CD4-positive, alpha-beta memory T cell (primary cell): ENCODE measurements at regions of chr11 and their contacts with region 1.

Region 1: GRCh38 chr11:14907411-14908213 is 15.6 kb upstream of the CYP2R1 start:
- DNase-seq: peak; percentile 74 to 81 (median 76)
- H3K4me3 ChIP-seq: no peak overlapping the region
- H3K4me3 Mint-ChIP-seq: peak overlapping the region in 4 of 8 donors; percentile 21 to 53 (median 40)
- H3K27ac ChIP-seq: no peak overlapping the region
- H3K27ac Mint-ChIP-seq: peak overlapping the region; percentile 6 to 94 (median 69)
- H3K4me1 ChIP-seq: peaks cover 29% of the 10 kb centered on the region
- H3K4me1 Mint-ChIP-seq: peaks cover 22 to 50% (median 34%) of the 10 kb centered on the region in 4 donors
- H3K27me3 ChIP-seq: no peaks in the 10 kb centered on the region
- H3K27me3 Mint-ChIP-seq: no peaks in the 10 kb centered on the region

Region 2: DNA sequence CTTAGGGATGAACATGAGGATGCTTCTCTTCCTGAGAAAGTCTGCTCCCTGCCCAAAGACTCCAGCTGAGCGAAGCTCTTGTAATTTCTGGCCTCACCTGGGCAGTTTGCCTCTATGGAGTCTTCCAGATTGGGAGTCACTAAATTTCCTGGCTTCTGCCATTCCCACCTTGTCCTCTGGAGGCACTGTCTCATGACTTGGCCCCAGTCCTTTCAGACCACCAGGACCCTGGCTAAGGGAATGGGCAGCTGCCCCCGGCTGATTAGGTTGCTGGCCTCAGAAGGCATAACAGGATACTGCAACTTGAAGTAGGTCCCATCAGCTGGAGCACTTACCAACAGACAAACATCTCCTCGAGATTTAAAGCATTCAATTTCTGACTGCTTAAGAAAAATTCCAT is 1073.1 kb before region 1 on chr11:
- CTCF ChIA-PET with region 1: no interaction called
- POLR2A ChIA-PET with region 1: no interaction called
- intact Hi-C with region 1: no loop called
- DNase-seq: no peak
- H3K4me3 ChIP-seq: no peak overlapping the region
- H3K4me3 Mint-ChIP-seq: no peak overlapping the region
- H3K27ac ChIP-seq: no peak overlapping the region
- H3K27ac Mint-ChIP-seq: no peak overlapping the region
- H3K4me1 ChIP-seq: no peaks in the 10 kb centered on the region
- H3K4me1 Mint-ChIP-seq: peaks cover 0 to 4% (median under 1%) of the 10 kb centered on the region in 4 donors
- H3K27me3 ChIP-seq: no peaks in the 10 kb centered on the region
- H3K27me3 Mint-ChIP-seq: peaks cover 0 to 2% of the 10 kb centered on the region in 2 donors

Region 3: DNA sequence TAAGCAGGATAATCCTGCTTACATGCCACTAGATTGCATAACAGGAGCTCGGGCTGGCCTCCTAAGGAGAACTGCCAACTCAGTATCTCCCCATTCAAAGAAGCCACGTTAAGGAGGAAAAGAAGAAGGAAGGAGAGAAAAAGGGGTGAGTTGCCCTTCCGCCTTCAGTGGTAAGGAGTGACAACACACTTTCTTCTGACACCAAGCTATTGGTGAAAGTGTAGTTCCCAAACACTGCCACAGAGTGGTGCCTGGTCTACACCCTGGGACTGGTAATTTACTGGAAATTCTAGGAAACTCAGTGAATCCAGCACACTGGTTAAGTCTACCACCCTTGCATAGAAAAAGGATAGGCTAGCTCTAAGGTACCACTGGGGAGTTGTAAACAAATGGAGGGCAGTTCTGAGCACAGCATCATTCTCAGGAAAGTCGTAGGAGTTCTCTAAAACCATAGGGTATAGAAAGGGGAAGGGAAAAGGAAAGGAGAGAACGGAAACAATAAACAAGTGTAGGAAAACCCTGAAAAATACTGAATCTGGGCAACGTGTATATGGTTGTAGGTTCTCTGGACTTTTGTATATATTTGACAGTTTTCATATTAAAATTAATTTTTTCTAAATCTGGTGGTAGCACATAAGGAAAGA is 606.8 kb before region 1 on chr11:
- CTCF ChIA-PET with region 1: interaction called, 15 read pairs
- POLR2A ChIA-PET with region 1: no interaction called
- intact Hi-C with region 1: loop called (anchors 1 kb)
- DNase-seq: peak in 4 of 5 donors; percentile 36 to 47 (median 44)
- H3K4me3 ChIP-seq: no peak overlapping the region
- H3K4me3 Mint-ChIP-seq: no peak overlapping the region
- H3K27ac ChIP-seq: no peak overlapping the region
- H3K27ac Mint-ChIP-seq: no peak overlapping the region
- H3K4me1 ChIP-seq: peaks cover 7% of the 10 kb centered on the region
- H3K4me1 Mint-ChIP-seq: peaks cover 0 to 10% (median 4%) of the 10 kb centered on the region in 4 donors
- H3K27me3 ChIP-seq: no peaks in the 10 kb centered on the region
- H3K27me3 Mint-ChIP-seq: no peaks in the 10 kb centered on the region

Region 4: DNA sequence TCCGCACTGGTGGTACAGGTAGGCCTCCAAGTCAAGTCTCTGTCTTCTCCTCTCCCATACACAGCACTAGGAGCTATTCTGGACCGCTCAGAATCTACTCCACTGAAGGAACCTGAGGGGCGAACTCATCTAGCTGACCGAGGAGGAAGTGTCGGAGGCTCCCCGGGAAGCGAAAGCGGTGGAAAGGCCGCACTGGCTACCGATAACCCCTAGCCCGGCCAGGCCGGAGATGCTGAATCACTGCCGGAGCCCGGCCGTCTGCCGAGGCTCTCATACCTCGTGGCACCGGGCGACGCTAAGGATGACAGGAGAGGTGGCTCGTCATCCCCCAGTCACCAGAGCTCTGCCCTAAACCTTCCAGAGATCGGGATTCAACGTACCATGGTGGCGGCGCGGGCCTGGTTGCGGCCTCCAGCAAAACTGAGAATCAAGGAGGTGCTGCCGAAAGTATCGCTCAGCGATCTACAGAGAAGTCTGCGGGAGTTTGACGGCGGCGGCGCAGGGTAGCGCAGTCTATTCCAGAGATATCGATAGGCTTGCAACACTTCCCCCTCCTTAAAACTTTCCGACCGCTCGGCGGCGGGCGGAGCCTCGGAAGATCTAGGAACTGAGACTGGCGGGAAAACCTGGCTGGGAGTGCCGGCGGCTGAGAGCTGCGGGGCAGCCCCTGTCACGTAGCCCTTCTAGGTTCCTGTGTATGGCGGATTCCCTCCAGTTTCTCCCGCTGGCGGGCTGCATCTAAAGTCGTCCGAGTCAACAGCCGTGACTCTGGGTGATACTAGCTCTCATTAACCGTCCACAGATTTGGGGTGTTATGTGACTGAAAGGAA is 387.5 kb before region 1 on chr11 and contains the start of gene PSMA1:
- CTCF ChIA-PET with region 1: interaction called, 34 read pairs
- POLR2A ChIA-PET with region 1: interaction called, 8 read pairs
- intact Hi-C with region 1: loop called (anchors 1 kb)
- DNase-seq: peak; percentile 88 to 96 (median 91)
- H3K4me3 ChIP-seq: peak within 1 kb of the TSS; percentile 63 to 95
- H3K4me3 Mint-ChIP-seq: peak within 1 kb of the TSS; percentile 93 to 99 (median 98)
- H3K27ac ChIP-seq: peak within 1 kb of the TSS; percentile 99
- H3K27ac Mint-ChIP-seq: peak within 1 kb of the TSS; percentile 95 to 98 (median 98)
- H3K4me1 ChIP-seq: peaks cover 27% of the 10 kb centered on the region
- H3K4me1 Mint-ChIP-seq: peaks cover 17 to 41% (median 29%) of the 10 kb centered on the region in 4 donors
- H3K27me3 ChIP-seq: no peaks in the 10 kb centered on the region
- H3K27me3 Mint-ChIP-seq: no peaks in the 10 kb centered on the region
- total RNA-seq, gene PSMA1: 95.8 to 105 TPM

Region 5: DNA sequence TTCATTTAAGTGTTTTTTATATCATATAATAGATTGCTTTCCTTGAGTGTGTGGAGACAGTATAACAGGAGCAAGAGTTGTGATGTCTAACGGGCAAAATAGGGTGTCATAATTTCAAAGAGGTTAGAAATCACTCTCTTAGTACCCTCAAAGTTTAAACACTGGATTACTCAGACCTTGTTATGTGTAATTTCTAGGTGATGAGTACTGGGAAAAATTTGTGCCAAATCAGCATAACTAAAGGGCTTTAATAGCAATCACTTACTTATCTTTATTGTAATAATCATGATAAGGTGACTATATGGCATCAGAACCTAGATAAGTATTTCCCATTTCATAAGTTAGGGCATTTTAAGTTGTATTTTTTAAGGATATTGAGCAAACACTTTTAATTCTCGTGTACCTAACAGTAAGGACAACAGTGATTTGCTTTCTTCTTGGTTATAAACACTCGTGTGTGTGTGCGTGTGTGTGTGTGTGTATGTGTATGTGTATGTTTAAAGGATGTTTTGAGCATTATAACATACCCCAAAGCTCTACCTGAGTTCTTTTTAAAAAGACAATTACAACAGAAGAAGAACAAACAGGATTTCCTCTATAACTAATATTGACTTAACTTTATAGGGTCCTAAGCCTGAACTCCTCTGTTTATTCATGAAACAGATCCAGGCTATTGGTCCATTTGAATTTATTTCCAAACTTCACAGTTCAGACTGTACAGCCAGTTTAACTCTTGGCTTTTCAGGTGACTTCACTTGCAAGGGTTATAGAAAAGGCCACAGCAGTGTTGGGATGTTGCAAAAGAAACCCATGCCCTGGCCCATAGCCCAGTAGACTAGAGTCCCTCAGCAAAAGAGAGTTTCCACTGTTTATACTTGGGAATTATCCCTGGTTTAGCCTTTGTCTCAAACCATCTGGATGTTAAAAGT is 287.7 kb before region 1 on chr11:
- CTCF ChIA-PET with region 1: interaction called, 81 read pairs
- POLR2A ChIA-PET with region 1: interaction called, 5 read pairs
- intact Hi-C with region 1: loop called (anchors 1 kb)
- DNase-seq: no peak
- H3K4me3 ChIP-seq: no peak overlapping the region
- H3K4me3 Mint-ChIP-seq: no peak overlapping the region
- H3K27ac ChIP-seq: no peak overlapping the region
- H3K27ac Mint-ChIP-seq: peak overlapping the region in 1 of 7 donors; percentile 65
- H3K4me1 ChIP-seq: peaks cover 5% of the 10 kb centered on the region
- H3K4me1 Mint-ChIP-seq: peaks cover 17 to 55% (median 34%) of the 10 kb centered on the region in 4 donors
- H3K27me3 ChIP-seq: no peaks in the 10 kb centered on the region
- H3K27me3 Mint-ChIP-seq: no peaks in the 10 kb centered on the region

Region 6: GRCh38 chr11:14819596-14819995 is 88.0 kb before region 1 on chr11:
- CTCF ChIA-PET with region 1: interaction called, 18 read pairs
- POLR2A ChIA-PET with region 1: no interaction called
- intact Hi-C with region 1: no loop called
- DNase-seq: no peak
- H3K4me3 ChIP-seq: no peak overlapping the region
- H3K4me3 Mint-ChIP-seq: no peak overlapping the region
- H3K27ac ChIP-seq: no peak overlapping the region
- H3K27ac Mint-ChIP-seq: no peak overlapping the region
- H3K4me1 ChIP-seq: no peaks in the 10 kb centered on the region
- H3K4me1 Mint-ChIP-seq: no peaks in the 10 kb centered on the region
- H3K27me3 ChIP-seq: no peaks in the 10 kb centered on the region
- H3K27me3 Mint-ChIP-seq: no peaks in the 10 kb centered on the region

Region 7: GRCh38 chr11:14949437-14950147 is 42.0 kb after region 1 on chr11:
- CTCF ChIA-PET with region 1: interaction called, 12 read pairs
- POLR2A ChIA-PET with region 1: no interaction called
- intact Hi-C with region 1: no loop called
- DNase-seq: no peak
- H3K4me3 ChIP-seq: no peak overlapping the region
- H3K4me3 Mint-ChIP-seq: no peak overlapping the region
- H3K27ac ChIP-seq: no peak overlapping the region
- H3K27ac Mint-ChIP-seq: no peak overlapping the region
- H3K4me1 ChIP-seq: no peaks in the 10 kb centered on the region
- H3K4me1 Mint-ChIP-seq: no peaks in the 10 kb centered on the region
- H3K27me3 ChIP-seq: no peaks in the 10 kb centered on the region
- H3K27me3 Mint-ChIP-seq: peaks cover 0 to 2% of the 10 kb centered on the region in 2 donors

Region 8: DNA sequence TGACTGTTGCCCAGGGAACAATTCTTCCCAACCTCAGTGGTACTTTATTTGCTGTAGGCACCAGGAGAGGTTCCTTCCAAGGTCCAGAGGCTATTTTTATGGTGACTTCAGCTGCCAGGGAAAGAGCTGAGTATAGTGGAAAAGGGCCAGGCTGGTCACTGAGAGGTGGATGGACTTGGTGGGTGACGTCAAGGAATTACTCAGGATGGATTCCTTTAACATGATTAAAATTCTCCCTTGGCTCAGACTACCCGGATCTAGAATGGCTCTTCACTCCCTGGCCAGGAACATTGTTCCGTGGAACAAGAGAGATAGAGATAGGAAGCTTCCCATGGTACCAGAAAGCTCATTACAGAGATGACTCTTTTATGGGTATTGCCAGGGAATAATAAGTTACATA is 73.2 kb after region 1 on chr11:
- CTCF ChIA-PET with region 1: no interaction called
- POLR2A ChIA-PET with region 1: no interaction called
- intact Hi-C with region 1: no loop called
- DNase-seq: no peak
- H3K4me3 ChIP-seq: no peak overlapping the region
- H3K4me3 Mint-ChIP-seq: no peak overlapping the region
- H3K27ac ChIP-seq: no peak overlapping the region
- H3K27ac Mint-ChIP-seq: no peak overlapping the region
- H3K4me1 ChIP-seq: no peaks in the 10 kb centered on the region
- H3K4me1 Mint-ChIP-seq: peaks cover 0 to 2% (median 0%) of the 10 kb centered on the region in 4 donors
- H3K27me3 ChIP-seq: peaks cover 6% of the 10 kb centered on the region
- H3K27me3 Mint-ChIP-seq: peaks cover 9 to 11% of the 10 kb centered on the region in 2 donors

Region 9: DNA sequence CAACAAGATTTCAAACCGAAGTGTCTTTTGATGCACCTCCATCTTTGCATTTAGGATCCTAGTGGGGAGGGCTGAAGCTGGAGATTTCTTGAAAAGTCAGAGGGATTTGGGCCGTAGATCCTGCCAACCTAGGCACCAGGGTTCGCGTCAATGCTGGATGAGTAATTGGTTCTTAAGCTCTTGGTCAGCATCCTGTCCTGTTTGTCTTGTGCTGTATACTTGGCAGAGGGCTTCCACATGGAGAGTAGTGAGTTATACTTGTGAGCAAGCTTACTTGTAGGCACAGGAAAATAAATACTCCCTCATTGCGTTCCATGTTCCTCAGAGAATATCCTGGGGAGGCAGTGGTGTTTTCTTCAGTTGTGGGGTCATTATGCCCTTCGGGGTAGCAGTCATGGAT is 219.7 kb after region 1 on chr11:
- CTCF ChIA-PET with region 1: no interaction called
- POLR2A ChIA-PET with region 1: no interaction called
- intact Hi-C with region 1: no loop called
- DNase-seq: no peak
- H3K4me3 ChIP-seq: no peak overlapping the region
- H3K4me3 Mint-ChIP-seq: no peak overlapping the region
- H3K27ac ChIP-seq: no peak overlapping the region
- H3K27ac Mint-ChIP-seq: no peak overlapping the region
- H3K4me1 ChIP-seq: no peaks in the 10 kb centered on the region
- H3K4me1 Mint-ChIP-seq: no peaks in the 10 kb centered on the region
- H3K27me3 ChIP-seq: no peaks in the 10 kb centered on the region
- H3K27me3 Mint-ChIP-seq: peaks cover 15 to 26% of the 10 kb centered on the region in 2 donors

Region 10: GRCh38 chr11:15208378-15209222 is 301.0 kb after region 1 on chr11:
- CTCF ChIA-PET with region 1: interaction called, 80 read pairs
- POLR2A ChIA-PET with region 1: interaction called, 3 read pairs
- intact Hi-C with region 1: no loop called
- DNase-seq: peak; percentile 49 to 68 (median 57)
- H3K4me3 ChIP-seq: no peak overlapping the region
- H3K4me3 Mint-ChIP-seq: no peak overlapping the region
- H3K27ac ChIP-seq: no peak overlapping the region
- H3K27ac Mint-ChIP-seq: no peak overlapping the region
- H3K4me1 ChIP-seq: no peaks in the 10 kb centered on the region
- H3K4me1 Mint-ChIP-seq: no peaks in the 10 kb centered on the region
- H3K27me3 ChIP-seq: no peaks in the 10 kb centered on the region
- H3K27me3 Mint-ChIP-seq: peaks cover 0 to 2% of the 10 kb centered on the region in 2 donors

Region 11: GRCh38 chr11:15258433-15259165 is 351.0 kb after region 1 on chr11:
- CTCF ChIA-PET with region 1: no interaction called
- POLR2A ChIA-PET with region 1: no interaction called
- intact Hi-C with region 1: no loop called
- DNase-seq: no peak
- H3K4me3 ChIP-seq: no peak overlapping the region
- H3K4me3 Mint-ChIP-seq: no peak overlapping the region
- H3K27ac ChIP-seq: no peak overlapping the region
- H3K27ac Mint-ChIP-seq: peak overlapping the region in 1 of 7 donors; percentile 11
- H3K4me1 ChIP-seq: no peaks in the 10 kb centered on the region
- H3K4me1 Mint-ChIP-seq: no peaks in the 10 kb centered on the region
- H3K27me3 ChIP-seq: no peaks in the 10 kb centered on the region
- H3K27me3 Mint-ChIP-seq: peaks cover 0 to 1% of the 10 kb centered on the region in 2 donors